Thyroid gland (tissue), 4 donors: ENCODE measurements at regions of chr3 and their contacts with region 1.

Region 1: DNA sequence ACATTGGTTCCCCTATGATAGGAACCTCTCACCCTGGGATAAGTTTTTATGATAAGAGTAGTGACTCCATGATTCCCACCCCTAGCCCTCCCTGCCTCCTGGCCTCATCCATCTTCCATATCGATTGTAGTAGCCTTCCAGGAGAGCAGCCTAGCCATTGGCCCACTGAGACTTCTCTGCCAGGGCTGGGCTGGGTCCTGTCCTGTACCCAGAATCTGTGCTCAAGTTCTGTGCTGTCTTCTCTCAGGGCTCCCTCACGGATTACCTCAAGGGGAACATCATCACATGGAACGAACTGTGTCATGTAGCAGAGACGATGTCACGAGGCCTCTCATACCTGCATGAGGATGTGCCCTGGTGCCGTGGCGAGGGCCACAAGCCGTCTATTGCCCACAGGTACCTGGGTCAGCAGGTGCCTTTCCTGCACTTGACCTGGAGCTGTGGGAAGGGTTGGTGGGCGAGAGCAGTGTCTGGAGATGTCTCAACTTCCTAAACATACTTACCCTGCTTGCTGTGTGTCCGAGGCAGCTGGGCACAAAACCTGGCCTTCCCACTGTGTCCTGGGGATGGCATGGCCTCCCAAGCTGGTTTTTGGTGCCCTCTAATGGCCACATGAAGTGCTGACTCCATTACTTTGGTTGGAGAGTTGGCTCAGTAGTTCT is 16.6 kb upstream of the EXOG start:
- DNase-seq: peak; percentile 68 to 75
- H3K4me3 ChIP-seq: no peak overlapping the region
- H3K27ac ChIP-seq: no peak overlapping the region
- H3K4me1 ChIP-seq: no peaks in the 10 kb centered on the region
- H3K27me3 ChIP-seq: no peaks in the 10 kb centered on the region
- CTCF ChIP-seq: peak; percentile 72 to 86 (median 77)
- POLR2A ChIP-seq: no peak

Region 2: DNA sequence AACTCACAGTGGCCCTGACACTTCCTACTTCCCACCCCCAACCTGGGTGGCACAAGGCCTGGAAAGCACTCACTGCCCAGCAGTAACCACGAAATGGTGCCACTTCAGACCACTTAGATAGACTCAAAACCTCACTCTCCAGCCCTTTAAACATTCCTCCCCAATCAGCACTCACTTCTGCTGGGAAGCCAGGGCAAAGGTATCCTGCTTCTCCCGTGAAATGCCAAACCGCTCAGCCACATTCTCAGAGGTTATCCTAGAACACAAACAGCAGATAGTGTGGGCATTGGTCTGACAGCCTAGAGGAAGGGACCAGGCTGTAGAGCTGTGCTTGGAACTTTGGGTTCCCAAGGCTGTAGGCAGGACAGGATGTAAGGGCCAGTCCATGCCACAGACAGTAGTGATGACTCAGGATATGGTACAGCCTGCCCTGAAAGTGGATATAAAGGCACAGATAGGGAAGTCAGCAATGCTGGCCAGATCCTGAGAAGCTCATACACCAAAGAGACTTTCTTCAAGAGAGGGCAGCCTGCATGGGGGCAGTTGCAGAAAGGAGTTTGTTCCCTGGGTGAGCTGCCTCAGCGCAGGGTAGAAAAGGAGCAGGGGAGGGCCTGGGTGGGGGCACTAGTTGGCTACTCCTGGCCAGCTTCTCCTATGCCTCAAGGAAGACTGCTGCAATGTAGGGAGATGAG is 351.8 kb before region 1 on chr3:
- intact Hi-C with region 1: loop called (anchors 10 kb)
- DNase-seq: peak; percentile 16 to 29
- H3K4me3 ChIP-seq: no peak overlapping the region
- H3K27ac ChIP-seq: no peak overlapping the region
- H3K4me1 ChIP-seq: peaks cover 0 to 11% of the 10 kb centered on the region in 2 donors
- H3K27me3 ChIP-seq: no peaks in the 10 kb centered on the region
- CTCF ChIP-seq: no peak
- POLR2A ChIP-seq: no peak

Region 3: DNA sequence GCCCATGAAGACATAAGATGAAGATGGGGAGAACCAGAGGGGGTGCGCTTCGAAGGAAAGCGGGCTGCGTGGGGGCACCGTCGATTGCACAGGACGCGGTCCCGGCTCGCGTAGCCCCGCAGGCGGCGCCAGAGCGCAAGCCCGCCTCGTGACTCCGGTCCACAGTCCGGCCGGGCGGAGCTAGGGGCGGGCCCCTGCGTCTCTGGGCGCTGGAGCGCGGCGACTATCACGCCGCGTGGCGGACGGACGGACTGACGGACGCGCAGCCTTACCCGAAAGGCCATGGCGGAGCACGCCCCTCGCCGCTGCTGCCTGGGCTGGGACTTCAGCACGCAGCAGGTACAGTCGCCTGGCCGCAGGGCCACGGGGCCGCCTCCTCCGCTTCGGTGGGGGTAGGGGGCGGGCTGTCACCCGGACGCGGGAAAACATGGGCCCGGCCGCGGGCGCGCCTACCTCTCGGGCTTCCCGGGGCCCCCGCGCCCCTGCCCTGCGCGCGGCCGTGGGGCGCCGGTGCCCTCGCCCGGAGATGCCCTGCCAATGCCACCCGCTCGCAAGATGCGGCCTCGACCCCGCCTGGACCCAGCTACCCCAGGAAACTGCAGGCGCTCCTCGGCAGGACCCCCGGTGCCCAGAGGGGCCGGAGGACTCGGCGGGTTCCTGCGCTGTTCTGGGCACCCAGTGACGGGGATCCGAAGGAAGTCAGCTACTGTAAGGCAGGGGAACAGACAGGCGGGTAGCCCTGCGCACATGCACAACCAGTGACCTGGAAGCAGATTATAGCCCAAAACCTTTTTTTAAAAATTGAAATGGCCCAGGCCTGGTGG is 132.8 kb before region 1 on chr3 and contains the start of gene XYLB:
- intact Hi-C with region 1: loop called (anchors 2 kb)
- DNase-seq: peak; percentile 82 to 86
- H3K4me3 ChIP-seq: peak within 1 kb of the TSS; percentile 35 to 85 (median 61)
- H3K27ac ChIP-seq: no peak within 1 kb of the TSS
- H3K4me1 ChIP-seq: peaks cover 0 to 11% of the 10 kb centered on the region in 2 donors
- H3K27me3 ChIP-seq: no peaks in the 10 kb centered on the region
- CTCF ChIP-seq: peak; percentile 38 to 96 (median 77)
- POLR2A ChIP-seq: no peak
- total RNA-seq, gene XYLB: 0.78 to 1.7 (median 1.1) TPM